ENCODE measurements at regions of chr2 and their contacts with region 1.

Region 1: DNA sequence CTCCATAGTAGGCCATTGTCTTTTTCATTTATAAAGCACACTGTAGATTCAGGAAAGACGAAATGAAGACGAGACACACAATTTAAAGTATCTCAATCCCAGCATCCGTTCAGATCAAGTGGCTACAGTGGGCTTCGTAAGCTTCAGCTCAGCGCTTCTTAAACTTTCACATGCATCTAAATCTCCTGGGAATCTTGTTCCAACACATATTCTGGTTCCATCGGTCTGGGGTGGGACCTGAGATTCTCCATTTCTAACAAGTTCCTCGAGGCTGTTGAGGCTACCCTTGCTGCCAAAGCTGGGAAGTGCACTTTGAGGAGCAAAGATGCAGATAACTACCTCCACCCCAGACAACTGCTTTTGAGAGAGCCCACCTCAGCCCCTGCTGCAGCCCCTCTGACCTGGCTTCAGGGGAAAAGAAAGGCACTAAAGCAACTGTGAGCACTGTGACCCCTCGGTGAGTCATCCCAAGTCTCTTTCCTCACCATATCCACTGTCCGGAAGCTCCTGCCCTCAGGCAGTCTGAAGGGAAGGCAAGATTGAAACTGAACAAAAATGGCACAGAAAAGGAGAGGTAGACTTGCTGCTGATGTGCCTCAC is 201.1 kb upstream of the FBXO11 start:
- DNase-seq: no peak
- H3K4me3 ChIP-seq: no peak overlapping the region
- H3K27ac ChIP-seq: no peak overlapping the region
- H3K4me1 ChIP-seq: peaks cover 0 to 26% (median 16%) of the 10 kb centered on the region in 4 donors
- H3K27me3 ChIP-seq: no peaks in the 10 kb centered on the region
- CTCF ChIP-seq: no peak

Region 2: DNA sequence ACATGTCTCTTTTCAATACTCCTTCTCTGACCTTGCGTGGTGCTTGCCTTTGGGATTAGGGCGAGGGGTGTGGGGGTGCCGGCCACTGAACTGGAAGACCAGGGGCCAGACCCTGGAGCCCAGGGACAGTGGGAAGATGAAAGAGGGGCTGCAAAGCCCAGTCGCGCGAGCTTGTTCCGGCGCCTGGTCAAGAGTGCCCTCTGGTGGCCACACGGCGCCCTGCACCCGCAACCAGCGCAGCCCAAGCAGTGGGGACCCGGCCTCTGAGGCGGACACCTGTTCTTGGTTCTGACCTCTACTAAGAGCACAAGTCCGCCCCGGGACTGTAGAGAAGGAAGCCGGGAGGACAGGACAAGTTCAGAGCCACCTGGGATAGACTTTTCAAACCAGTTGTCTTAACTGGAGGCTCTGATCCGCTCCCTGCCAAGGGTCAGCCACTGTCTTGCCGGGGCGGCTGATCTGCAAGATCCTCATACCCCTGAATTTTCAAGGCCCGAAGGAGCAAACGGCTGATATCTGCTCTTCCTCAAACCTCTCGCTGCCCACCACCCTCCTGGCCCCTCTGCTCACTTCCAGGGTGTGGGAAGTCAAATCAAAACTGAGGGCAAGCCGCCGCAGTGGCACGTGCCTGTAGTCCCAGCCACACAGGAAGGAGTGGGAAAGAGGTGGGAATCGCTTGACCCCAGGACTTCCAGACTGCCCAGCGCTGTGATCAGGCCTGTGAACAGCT is 339.4 kb before region 1 on chr2:
- intact Hi-C with region 1: loop called (anchors 10 kb)
- DNase-seq: peak; percentile 43 to 75
- H3K4me3 ChIP-seq: no peak overlapping the region
- H3K27ac ChIP-seq: no peak overlapping the region
- H3K4me1 ChIP-seq: peaks cover 0 to 6% (median 3%) of the 10 kb centered on the region in 4 donors
- H3K27me3 ChIP-seq: no peaks in the 10 kb centered on the region
- CTCF ChIP-seq: peak; percentile 92 to 99

Region 3: GRCh38 chr2:47862949-47863348 is 244.5 kb before region 1 on chr2:
- intact Hi-C with region 1: loop called (anchors 5 kb)
- DNase-seq: no peak
- H3K4me3 ChIP-seq: no peak overlapping the region
- H3K27ac ChIP-seq: no peak overlapping the region
- H3K4me1 ChIP-seq: peaks cover 0 to 40% (median 11%) of the 10 kb centered on the region in 4 donors
- H3K27me3 ChIP-seq: no peaks in the 10 kb centered on the region
- CTCF ChIP-seq: no peak

Region 4: DNA sequence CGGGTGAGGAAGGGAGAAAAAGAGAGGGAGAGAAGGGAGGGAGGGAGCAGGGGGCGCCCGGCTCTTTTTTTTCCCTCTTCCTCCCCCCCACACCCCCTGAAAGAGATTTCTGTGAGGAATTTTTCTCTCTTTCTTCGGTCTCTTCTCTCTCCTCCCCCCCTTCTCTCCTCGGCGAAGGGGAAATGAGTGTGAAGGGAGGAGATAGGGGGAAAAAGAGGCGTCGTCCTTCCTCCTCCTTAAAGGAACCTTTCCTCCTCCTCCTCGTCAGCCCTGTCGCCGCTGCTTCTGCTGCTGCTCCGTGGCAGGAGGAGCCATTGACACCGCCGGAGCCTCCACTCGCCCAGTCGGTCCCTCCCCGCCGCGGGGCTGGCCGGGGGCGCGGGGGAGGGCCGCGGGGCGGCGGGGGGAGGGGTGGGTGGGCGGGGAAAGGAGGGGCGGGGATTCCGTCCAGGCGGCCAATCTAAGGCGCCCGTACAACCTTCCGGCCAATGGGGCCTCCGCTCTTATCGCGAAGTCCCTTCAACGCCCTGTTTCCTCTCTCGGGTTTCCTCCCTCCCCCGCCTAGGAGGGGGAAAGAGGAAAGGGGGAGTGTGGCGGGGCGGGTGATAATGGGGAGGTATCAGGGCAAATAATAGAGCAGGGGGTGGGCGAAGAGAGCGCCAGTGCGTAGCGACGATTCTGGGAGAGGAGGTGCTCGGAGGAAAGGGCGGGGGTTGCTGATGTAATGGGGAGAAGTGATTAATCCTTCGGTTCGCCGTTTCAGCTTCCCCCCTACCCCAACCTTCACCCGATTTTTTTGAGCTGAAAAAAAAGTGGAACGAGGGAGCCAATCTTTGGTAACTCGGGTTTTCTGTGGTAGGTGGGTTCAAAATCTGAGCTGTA is 201.0 kb before region 1 on chr2 and contains the start of gene FBXO11:
- intact Hi-C with region 1: loop called (anchors 10 kb)
- DNase-seq: peak; percentile 98 to 99
- H3K4me3 ChIP-seq: peak within 1 kb of the TSS; percentile 96 to 100
- H3K27ac ChIP-seq: peak within 1 kb of the TSS; percentile 98 to 100
- H3K4me1 ChIP-seq: peaks cover 0 to 26% (median 2%) of the 10 kb centered on the region in 4 donors
- H3K27me3 ChIP-seq: no peaks in the 10 kb centered on the region
- CTCF ChIP-seq: peak; percentile 56 to 58

Region 5: DNA sequence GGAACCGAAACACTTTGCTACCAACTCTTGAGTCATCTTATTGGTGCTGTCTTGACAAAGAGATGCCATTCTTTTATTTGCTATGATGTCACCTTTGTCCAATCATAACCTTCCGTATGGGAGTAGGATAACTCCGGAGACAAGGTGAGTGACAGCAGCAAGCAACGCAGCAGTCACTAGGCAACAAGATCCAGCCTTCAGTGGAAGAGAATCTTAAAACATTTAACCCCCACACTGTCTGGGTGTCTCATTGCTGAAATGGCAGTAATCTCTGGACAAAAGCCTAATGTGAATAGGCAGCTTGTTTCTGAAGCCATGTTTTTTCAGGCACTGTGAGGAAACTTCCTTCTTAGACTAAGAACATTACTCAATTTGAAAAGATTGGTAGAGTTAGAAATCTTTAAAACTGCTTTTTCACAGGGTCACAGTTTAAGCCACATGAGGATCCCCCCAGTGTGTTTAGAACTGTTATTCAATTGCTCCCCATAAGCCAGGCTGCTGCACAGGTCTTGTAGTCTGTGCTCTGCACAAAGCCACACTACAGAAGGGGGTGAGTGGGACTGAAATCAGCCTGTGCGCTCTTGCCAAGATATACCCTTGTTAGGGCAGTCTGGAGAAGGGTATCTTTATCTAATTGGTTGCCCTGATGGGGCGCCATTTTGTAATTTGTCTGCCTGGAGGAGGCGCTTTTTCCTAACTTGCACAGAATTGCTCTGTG is 291.0 kb after region 1 on chr2:
- intact Hi-C with region 1: no loop called
- DNase-seq: no peak
- H3K4me3 ChIP-seq: no peak overlapping the region
- H3K27ac ChIP-seq: no peak overlapping the region
- H3K4me1 ChIP-seq: no peaks in the 10 kb centered on the region
- H3K27me3 ChIP-seq: no peaks in the 10 kb centered on the region
- CTCF ChIP-seq: no peak

Measured in tibial artery (tissue), 4 donors.